ENCODE measurements at regions of chr3 and their contacts with region 1.

Region 1: GRCh38 chr3:33318709-33319380 is 41.6 kb downstream of the FBXL2 start:
- DNase-seq: peak; percentile 14
- ATAC-seq: no peak
- H3K4me3 ChIP-seq: no peak overlapping the region
- H3K27ac ChIP-seq: no peak overlapping the region
- H3K4me1 ChIP-seq: peaks cover 6% of the 10 kb centered on the region; the same call in 1 of the 2 replicates
- H3K27me3 ChIP-seq: no peaks in the 10 kb centered on the region
- CTCF ChIP-seq: 0 out of 2 replicates have a peak, but pooled peaks have one; percentile 21
- POLR2A ChIP-seq: no peak
- RAD21 ChIP-seq: no peak

Region 2: DNA sequence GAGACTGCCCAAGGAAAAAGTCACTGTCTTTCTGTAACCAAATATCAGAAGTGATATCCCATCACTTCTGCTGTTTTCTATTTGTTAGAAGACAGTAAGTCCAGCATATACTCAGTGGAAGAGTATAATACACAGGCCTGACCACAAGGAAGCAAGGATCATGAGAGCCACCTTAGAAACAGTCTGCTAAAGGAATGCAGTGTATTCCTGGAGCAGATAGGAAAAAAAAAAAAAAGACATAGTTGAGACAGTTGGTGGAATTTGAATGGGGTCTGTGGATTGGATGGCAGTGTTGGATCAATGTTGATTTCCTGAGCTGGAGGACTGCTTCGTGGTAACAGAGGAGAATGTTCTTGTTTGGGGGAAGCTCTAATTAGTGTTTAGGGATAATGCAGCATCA is 68.1 kb before region 1 on chr3:
- CTCF ChIA-PET with region 1: no interaction called
- POLR2A ChIA-PET with region 1: no interaction called
- dilution Hi-C with region 1: no loop called
- in situ Hi-C with region 1: no loop called
- intact Hi-C with region 1: loop called (anchors 2 kb)
- DNase-seq: peak; percentile 3
- ATAC-seq: no peak
- H3K4me3 ChIP-seq: no peak overlapping the region
- H3K27ac ChIP-seq: no peak overlapping the region
- H3K4me1 ChIP-seq: no peaks in the 10 kb centered on the region
- H3K27me3 ChIP-seq: peaks cover 2% of the 10 kb centered on the region; the same call in 1 of the 2 replicates
- CTCF ChIP-seq: no peak
- POLR2A ChIP-seq: no peak
- RAD21 ChIP-seq: no peak

Region 3: GRCh38 chr3:33360136-33360825 is 41.4 kb after region 1 on chr3:
- CTCF ChIA-PET with region 1: no interaction called
- POLR2A ChIA-PET with region 1: no interaction called
- dilution Hi-C with region 1: no loop called
- in situ Hi-C with region 1: no loop called
- intact Hi-C with region 1: loop called (anchors 5 kb)
- DNase-seq: peak; percentile 79
- ATAC-seq: peak; percentile 55
- H3K4me3 ChIP-seq: no peak overlapping the region
- H3K27ac ChIP-seq: peak overlapping the region; percentile 3; the same call in 1 of the 2 replicates
- H3K4me1 ChIP-seq: peaks cover 8% of the 10 kb centered on the region
- H3K27me3 ChIP-seq: no peaks in the 10 kb centered on the region
- CTCF ChIP-seq: no peak
- POLR2A ChIP-seq: no peak
- RAD21 ChIP-seq: no peak

Region 4: GRCh38 chr3:33798411-33799201 is 479.8 kb after region 1 on chr3 and contains the start of gene PDCD6IP:
- CTCF ChIA-PET with region 1: no interaction called
- POLR2A ChIA-PET with region 1: no interaction called
- dilution Hi-C with region 1: no loop called
- in situ Hi-C with region 1: no loop called
- intact Hi-C with region 1: no loop called
- DNase-seq: peak; percentile 89
- ATAC-seq: peak; percentile 93
- H3K4me3 ChIP-seq: peak within 1 kb of the TSS; percentile 73
- H3K27ac ChIP-seq: peak within 1 kb of the TSS; percentile 84
- H3K4me1 ChIP-seq: peaks cover 3% of the 10 kb centered on the region
- H3K27me3 ChIP-seq: no peaks in the 10 kb centered on the region
- CTCF ChIP-seq: 0 out of 2 replicates have a peak, but pooled peaks have one; percentile 5
- POLR2A ChIP-seq: peak; percentile 95
- RAD21 ChIP-seq: no peak
- total RNA-seq, gene PDCD6IP: 68.1 and 76.1 TPM in 2 replicates

Measured in IMR-90 (cell line).